ENCODE measurements at regions of chr2 and their contacts with region 1.

Region 1: DNA sequence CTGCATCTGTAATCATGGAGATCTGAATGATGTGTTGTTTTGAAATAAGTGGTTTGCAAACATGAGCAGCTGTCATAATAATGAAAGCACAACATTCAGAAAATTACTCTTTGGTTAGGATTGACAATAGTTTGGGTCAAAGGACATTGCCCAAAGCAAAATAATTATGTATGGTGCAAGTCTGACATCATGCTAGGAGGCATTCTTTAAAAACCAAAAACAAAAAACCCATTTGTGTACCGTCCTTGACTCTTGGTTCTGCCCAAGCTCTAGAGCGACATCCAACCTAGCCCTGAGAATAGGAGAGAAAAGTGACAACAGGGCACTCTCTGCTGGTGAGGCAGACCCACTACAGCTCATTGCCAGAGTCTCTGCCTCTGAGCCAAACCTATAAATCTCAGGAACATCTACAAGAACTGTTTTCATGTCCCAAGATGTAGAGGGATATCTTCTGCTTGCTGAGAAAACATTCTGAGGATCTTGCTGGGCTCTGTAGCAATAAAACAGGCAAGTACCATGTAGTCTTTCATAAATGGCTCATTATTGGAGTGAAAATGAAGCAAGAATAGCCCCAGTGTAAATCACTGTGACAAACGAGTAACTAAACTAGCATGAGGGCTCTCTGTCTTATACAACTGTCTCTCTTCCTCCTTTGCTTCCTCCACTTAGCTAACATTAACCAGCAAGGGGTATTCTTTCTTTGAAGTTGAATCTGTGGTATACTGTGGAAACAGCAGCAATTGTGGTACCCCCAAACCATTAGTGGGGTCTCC is 266.8 kb upstream of the CXCR4 start:
- ATAC-seq: peak; percentile 54 to 90 (median 86)
- H3K4me3 ChIP-seq: no peak overlapping the region
- H3K27ac ChIP-seq: no peak overlapping the region
- H3K4me1 ChIP-seq: peaks cover 12 to 14% of the 10 kb centered on the region in 2 donors

Region 2: DNA sequence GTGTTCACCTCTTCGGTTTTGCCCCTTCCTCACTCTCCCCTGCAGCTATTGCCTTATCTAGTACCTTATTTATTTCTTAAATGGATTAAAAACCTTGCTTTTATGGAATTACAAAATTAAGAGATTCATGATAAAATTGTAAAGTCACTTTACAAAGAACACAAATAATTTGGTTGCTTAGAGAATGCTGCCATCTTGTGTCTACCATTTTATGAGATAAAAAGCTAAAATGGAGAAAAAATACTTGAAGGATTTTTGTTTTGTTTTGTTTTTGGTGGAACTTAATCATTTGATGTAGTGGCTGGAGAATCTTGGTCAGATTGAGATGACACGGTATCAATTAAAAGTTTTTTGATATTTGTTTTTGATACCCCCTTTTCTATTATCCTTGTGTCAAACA is 783.8 kb before region 1 on chr2:
- in situ Hi-C with region 1: no loop called
- ATAC-seq: no peak
- H3K4me3 ChIP-seq: no peak overlapping the region
- H3K27ac ChIP-seq: no peak overlapping the region
- H3K4me1 ChIP-seq: no peaks in the 10 kb centered on the region

Region 3: DNA sequence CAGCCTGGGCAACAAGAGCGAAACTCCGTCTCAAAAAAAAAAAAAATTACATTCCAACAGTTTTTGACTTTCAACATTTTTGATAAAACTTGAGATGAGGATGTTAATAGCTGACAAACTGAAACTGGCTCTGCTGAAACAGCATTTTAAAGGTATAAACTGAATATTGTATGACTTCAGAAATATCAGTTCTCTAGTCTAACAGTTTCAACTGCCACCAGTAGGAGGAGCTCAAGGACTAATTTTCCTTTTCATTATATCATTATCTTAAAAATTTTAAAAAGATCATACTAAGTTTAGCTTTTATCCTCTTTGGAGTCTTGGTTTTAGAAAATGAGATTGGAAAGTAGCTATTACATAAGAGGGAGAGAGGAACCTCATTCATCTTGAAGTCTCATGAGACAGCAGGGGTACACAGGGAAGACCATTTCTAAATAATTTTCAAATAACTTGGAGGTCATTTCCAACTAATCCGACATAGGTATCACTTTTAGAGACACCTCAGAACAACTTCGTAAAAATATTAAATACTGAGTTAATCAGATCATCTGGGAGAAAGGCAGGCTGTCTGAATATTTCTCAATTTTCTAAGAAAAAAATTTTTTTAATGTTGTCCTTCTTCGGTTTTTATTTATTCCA is 470.9 kb before region 1 on chr2:
- in situ Hi-C with region 1: loop called (anchors 5 to 25 kb)
- ATAC-seq: peak in 2 of 8 experiments; percentile 29 to 53
- H3K4me3 ChIP-seq: no peak overlapping the region
- H3K27ac ChIP-seq: no peak overlapping the region
- H3K4me1 ChIP-seq: no peaks in the 10 kb centered on the region

Region 4: DNA sequence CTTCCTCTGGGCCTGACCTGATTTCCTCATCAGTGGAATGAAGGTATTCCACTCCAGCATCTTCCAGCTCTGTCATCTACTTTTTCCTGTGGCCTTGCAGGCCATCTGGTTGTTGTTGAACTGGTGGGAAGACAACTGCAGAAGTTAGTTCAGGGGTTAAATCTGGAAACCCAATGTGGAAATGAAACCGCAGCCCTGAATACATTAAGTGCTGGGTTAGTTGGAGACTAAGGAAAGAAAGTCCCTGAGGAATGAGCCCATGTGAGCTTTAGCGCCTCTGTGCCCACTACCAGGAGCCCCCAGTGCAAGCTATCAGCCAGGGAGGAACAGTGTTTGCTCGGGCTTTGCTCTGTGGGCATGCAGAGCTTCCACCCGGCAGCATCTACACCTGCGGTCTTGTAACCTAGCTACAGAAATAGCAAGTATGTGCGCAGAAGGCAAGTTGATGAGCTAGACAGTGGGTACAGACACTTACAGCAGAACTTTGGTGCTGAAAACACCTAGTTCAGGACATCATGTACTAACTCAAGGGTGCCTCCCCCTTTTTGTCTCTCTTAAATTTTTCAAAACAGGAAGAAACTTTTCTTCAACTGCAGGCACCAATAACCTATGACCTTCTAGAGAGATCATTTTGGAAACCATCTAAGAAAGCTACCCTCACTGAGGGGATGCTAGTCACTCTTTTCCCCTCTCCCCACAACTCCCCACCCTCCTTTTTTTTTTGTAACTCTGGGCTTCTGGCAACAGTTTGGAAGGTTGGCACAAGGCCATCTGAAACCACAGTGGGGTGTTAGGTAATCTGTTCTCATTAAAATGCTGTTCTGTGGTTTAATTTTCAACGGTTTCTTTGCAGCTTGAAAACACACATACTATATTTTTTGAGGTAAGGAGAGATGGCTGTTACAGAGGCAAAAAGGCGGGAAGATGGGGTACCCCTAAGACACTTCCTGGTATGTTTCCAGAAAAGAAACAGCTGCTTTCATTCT is 248.5 kb before region 1 on chr2:
- in situ Hi-C with region 1: loop called in 1 of 9 experiments (anchors 25 kb)
- ATAC-seq: no peak
- H3K4me3 ChIP-seq: no peak overlapping the region
- H3K27ac ChIP-seq: no peak overlapping the region
- H3K4me1 ChIP-seq: peaks cover 5 to 13% of the 10 kb centered on the region in 2 donors

Region 5: GRCh38 chr2:136527560-136527959 is 142.8 kb after region 1 on chr2:
- in situ Hi-C with region 1: no loop called
- ATAC-seq: peak in 1 of 8 experiments; percentile 30
- H3K4me3 ChIP-seq: no peak overlapping the region
- H3K27ac ChIP-seq: no peak overlapping the region
- H3K4me1 ChIP-seq: no peaks in the 10 kb centered on the region